ENCODE measurements at regions of chr19 and their contacts with region 1.

Region 1: GRCh38 chr19:19425170-19425875 is 19.8 kb downstream of the GATAD2A start:
- DNase-seq: no peak
- ATAC-seq: no peak
- H3K4me3 ChIP-seq: no peak overlapping the region
- H3K27ac ChIP-seq: no peak overlapping the region
- H3K4me1 ChIP-seq: peaks cover 20% of the 10 kb centered on the region
- H3K27me3 ChIP-seq: no peaks in the 10 kb centered on the region
- CTCF ChIP-seq: no peak
- POLR2A ChIP-seq: no peak

Region 2: GRCh38 chr19:19259741-19260140 is 165.6 kb before region 1 on chr19:
- intact Hi-C with region 1: no loop called
- DNase-seq: no peak
- ATAC-seq: no peak
- H3K4me3 ChIP-seq: no peak overlapping the region
- H3K27ac ChIP-seq: no peak overlapping the region
- H3K4me1 ChIP-seq: no peaks in the 10 kb centered on the region
- H3K27me3 ChIP-seq: peaks cover 0 to 3% of the 10 kb centered on the region in 2 donors
- CTCF ChIP-seq: no peak
- POLR2A ChIP-seq: no peak

Region 3: DNA sequence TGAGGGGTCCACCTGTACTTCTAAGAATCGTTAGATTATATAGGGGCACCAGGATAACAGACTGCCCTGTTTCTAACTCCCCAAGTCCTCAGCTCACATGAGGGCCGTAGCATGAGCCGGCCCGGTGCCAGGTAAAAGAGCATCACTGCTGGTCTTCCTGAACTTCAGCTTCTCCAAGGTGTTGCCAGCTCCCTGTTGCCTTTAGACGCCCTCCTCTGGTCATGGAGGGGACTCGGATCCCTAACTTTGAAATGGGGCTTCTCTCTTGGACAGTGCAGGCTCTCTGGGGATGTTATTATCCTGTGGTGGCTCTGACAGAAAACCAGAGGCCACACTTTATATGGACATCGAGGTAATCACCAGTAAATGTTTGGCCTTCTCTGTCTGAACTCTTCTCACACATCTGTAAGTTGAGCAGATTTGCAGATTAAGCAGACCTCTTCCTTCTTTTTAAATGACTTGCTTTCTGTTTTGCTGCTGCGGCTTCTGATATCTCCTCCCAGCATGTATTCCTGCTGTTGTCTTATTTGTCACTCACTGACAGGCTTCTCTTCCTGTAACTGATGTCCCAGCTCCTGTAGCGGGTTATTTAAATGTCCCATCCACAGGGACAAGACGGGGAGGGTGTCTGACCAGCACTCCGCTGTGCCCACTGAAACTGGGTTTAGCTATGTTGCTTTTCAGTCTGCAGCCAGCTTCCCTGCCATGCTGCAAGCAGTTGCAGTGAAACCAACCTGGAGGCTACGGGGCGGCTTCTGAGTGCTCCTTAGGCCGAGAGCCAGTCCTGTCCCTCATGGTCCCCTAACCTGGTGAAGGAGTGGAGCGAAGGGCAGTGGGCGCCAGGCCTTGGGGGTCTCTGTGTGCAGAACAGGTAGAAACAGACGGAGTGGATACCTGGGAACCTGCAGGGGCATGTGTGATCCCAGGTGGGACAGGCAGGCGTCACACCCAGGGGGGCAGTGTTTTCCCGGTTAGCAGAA is 50.8 kb after region 1 on chr19:
- intact Hi-C with region 1: loop called (anchors 5 kb)
- DNase-seq: peak in 1 of 4 donors; percentile 21
- ATAC-seq: no peak
- H3K4me3 ChIP-seq: no peak overlapping the region
- H3K27ac ChIP-seq: no peak overlapping the region
- H3K4me1 ChIP-seq: peaks cover 11% of the 10 kb centered on the region
- H3K27me3 ChIP-seq: no peaks in the 10 kb centered on the region
- CTCF ChIP-seq: peak in 5 of 7 experiments; percentile 15 to 29 (median 20)
- POLR2A ChIP-seq: no peak

Region 4: GRCh38 chr19:19488875-19489690 is 63.8 kb after region 1 on chr19:
- intact Hi-C with region 1: no loop called
- DNase-seq: peak; percentile 70 to 89 (median 76)
- ATAC-seq: peak; percentile 74
- H3K4me3 ChIP-seq: no peak overlapping the region
- H3K27ac ChIP-seq: peak overlapping the region; percentile 66 to 88 (median 77)
- H3K4me1 ChIP-seq: peaks cover 55% of the 10 kb centered on the region
- H3K27me3 ChIP-seq: no peaks in the 10 kb centered on the region
- CTCF ChIP-seq: no peak
- POLR2A ChIP-seq: peak in 2 of 3 donors; percentile 23 to 27